Panc1 (cell line): ENCODE measurements at regions of chr18 and their contacts with region 1.

Region 1: DNA sequence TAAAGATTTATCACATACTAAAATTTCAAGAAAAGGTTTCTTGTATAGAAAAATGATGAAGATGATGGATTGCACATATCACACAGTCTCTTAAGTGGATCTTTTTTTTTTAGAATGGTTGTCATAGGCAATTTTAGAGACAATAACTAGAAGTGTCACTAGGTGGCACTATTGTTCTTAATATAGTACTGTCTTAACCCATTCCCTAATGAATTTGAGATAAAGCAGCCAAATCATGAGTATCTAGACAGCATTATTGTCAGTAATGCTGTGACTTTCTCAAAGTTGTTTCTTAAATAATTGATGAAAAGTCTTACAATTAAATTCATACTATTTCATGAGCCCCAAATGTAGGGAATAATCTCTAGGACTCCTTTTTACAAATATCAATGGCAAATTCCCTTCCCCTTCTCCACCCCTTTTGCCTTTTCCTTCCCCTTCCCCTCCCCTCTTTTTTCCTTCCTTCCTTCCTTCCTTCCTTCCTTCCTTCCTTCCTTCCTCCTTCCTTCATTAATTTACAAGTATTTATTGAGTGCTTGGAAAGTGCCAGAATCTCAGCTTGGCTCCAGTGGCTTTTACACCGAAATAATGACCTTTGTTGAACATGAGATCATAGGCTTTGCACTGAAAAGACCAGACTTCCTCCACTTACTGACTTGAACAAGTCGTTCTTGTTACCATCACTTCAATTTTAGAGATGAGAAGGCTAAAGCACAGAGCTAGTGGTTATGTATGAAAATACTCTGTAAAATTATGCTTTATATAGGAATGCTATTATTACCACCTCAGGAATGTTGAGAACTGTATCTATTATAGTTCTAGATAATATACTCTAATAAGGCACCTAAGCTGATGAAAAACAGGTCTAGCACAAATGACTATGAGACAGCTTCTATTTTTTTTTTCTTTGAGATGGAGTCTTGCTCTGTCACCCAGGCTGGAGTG is 19.8 kb downstream of the MYL12B start:
- DNase-seq: peak; percentile 84
- ATAC-seq: peak; percentile 45
- H3K4me3 ChIP-seq: no peak overlapping the region
- H3K27ac ChIP-seq: peak overlapping the region; percentile 100
- H3K4me1 ChIP-seq: peaks cover 61% of the 10 kb centered on the region
- H3K27me3 ChIP-seq: no peaks in the 10 kb centered on the region
- CTCF ChIP-seq: peak; percentile 50; the same call in 1 of the 2 replicates

Region 2: GRCh38 chr18:3447895-3448837 is 166.4 kb after region 1 on chr18:
- CTCF ChIA-PET with region 1: interaction called, 5 read pairs
- POLR2A ChIA-PET with region 1: interaction called, 15 read pairs
- in situ Hi-C with region 1: no loop called
- intact Hi-C with region 1: no loop called
- DNase-seq: no peak
- ATAC-seq: peak; percentile 80
- H3K4me3 ChIP-seq: peak overlapping the region; percentile 94 to 97
- H3K27ac ChIP-seq: peak overlapping the region; percentile 98
- H3K4me1 ChIP-seq: peaks cover 33% of the 10 kb centered on the region
- H3K27me3 ChIP-seq: no peaks in the 10 kb centered on the region
- CTCF ChIP-seq: peak; percentile 25; the same call in 1 of the 2 replicates

Region 3: GRCh38 chr18:3498698-3499471 is 217.2 kb after region 1 on chr18:
- CTCF ChIA-PET with region 1: no interaction called
- POLR2A ChIA-PET with region 1: no interaction called
- in situ Hi-C with region 1: no loop called
- intact Hi-C with region 1: loop called (anchors 5 kb)
- DNase-seq: no peak
- ATAC-seq: peak; percentile 75
- H3K4me3 ChIP-seq: peak overlapping the region; percentile 39 to 57
- H3K27ac ChIP-seq: peak overlapping the region; percentile 98
- H3K4me1 ChIP-seq: peaks cover 72% of the 10 kb centered on the region
- H3K27me3 ChIP-seq: no peaks in the 10 kb centered on the region
- CTCF ChIP-seq: no peak

Region 4: GRCh38 chr18:3604498-3605408 is 323.0 kb after region 1 on chr18:
- CTCF ChIA-PET with region 1: no interaction called
- POLR2A ChIA-PET with region 1: interaction called, 6 read pairs
- in situ Hi-C with region 1: no loop called
- intact Hi-C with region 1: loop called (anchors 2 kb)
- DNase-seq: peak; percentile 81
- ATAC-seq: peak; percentile 2; the same call in 1 of the 2 replicates
- H3K4me3 ChIP-seq: peak overlapping the region; percentile 57 to 72
- H3K27ac ChIP-seq: peak overlapping the region; percentile 100
- H3K4me1 ChIP-seq: peaks cover 51% of the 10 kb centered on the region
- H3K27me3 ChIP-seq: no peaks in the 10 kb centered on the region
- CTCF ChIP-seq: no peak

Region 5: DNA sequence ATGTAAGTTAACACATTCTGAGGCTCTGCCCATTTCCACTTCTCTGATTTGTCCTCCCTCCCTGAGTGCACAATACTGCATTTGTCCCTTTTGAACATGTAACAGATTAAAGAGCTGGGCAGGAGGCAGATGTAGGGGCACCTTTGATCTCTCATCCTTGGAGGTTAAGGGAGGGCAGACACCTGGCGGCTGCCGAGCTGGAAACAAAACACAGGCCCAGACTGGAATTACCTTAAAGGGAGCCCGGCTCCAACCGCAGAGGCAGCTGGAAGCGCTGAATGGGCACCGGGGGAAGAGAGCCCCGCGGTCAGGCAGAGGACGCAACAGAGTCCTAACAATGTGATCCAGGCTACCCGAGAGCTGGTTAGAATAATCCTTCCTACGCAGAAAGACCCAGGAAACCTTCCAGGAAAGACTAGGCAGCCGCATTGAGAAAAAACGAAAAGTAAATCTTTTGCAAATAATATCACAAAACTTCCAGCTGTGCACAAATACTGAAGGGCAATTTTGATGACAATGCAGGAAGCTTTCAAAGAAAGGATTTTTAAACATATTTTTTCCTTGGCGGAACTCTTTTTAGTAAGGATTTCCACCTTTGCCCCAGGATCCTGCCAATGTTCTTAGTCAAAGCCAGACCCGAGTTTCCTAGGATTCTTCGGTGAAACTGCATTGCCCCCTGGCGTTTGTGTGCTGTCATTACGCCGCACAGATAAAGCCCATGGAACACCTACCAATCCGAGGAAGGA is 384.2 kb after region 1 on chr18:
- CTCF ChIA-PET with region 1: interaction called, 3 read pairs
- POLR2A ChIA-PET with region 1: interaction called, 6 read pairs
- in situ Hi-C with region 1: no loop called
- intact Hi-C with region 1: loop called (anchors 2 kb)
- DNase-seq: peak; percentile 87
- ATAC-seq: peak; percentile 88
- H3K4me3 ChIP-seq: peak overlapping the region; percentile 3 to 4; a peak in 2 of 4 replicates
- H3K27ac ChIP-seq: peak overlapping the region; percentile 100
- H3K4me1 ChIP-seq: peaks cover 56% of the 10 kb centered on the region
- H3K27me3 ChIP-seq: no peaks in the 10 kb centered on the region
- CTCF ChIP-seq: peak; percentile 92

Region 6: GRCh38 chr18:3995476-3996102 is 713.9 kb after region 1 on chr18:
- CTCF ChIA-PET with region 1: no interaction called
- POLR2A ChIA-PET with region 1: no interaction called
- in situ Hi-C with region 1: no loop called
- intact Hi-C with region 1: loop called (anchors 5 kb)
- DNase-seq: peak; percentile 52
- ATAC-seq: no peak
- H3K4me3 ChIP-seq: no peak overlapping the region
- H3K27ac ChIP-seq: peak overlapping the region; percentile 3; the same call in 1 of the 2 replicates
- H3K4me1 ChIP-seq: peaks cover 7% of the 10 kb centered on the region; the same call in 1 of the 2 replicates
- H3K27me3 ChIP-seq: no peaks in the 10 kb centered on the region
- CTCF ChIP-seq: peak; percentile 90